Left colon (tissue), 2 donors: ENCODE measurements at regions of chr10 and their contacts with region 1.

Region 1: DNA sequence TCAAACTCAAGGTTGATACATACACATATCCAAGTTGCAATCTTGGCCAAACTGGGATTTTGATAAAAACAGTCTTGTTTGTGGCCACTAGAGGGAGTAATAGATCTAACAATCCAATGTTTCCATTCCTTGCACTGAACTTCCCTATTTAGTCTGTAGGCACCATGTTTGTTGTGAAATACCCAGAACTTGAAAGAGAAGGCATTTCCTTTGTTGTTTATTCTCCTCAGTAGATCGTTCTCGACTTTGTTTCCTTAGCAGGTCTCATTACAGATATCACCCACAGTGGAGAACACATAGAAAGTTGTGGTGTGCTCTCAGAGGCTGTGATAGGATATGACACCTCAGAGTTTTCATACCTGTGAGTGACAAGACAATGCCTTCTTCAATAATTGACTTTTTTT is 70.3 kb upstream of the MXI1 start:
- DNase-seq: no peak
- ATAC-seq: peak; percentile 56

Region 2: GRCh38 chr10:109883859-109884771 is 253.0 kb before region 1 on chr10:
- intact Hi-C with region 1: loop called in 1 of 2 experiments (anchors 10 kb)
- DNase-seq: peak; percentile 47 to 67
- ATAC-seq: peak; percentile 91

Region 3: DNA sequence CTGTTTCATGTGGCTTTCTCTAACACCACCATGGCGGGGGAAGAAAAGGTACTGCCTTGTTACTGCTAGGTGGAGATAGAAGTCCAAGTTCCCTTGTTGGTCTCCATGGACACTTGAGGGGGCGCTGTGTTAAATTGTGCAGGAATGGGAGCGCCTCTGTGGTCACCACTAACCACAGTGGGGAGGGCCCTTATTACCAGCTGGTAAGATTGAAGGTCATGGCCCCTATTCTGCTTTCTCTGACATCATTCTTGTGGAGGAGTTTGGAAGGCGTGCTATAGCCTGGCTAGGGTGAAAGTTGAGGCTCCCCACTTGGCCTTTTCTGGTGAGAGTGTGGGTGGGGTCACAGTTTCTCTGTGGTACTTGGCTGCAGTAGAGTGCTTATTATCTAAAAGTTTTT is 55.4 kb after region 1 on chr10:
- intact Hi-C with region 1: loop called in 1 of 2 experiments (anchors 10 kb)
- DNase-seq: no peak
- ATAC-seq: no peak

Region 4: GRCh38 chr10:110206995-110207804 is 70.1 kb after region 1 on chr10 and contains the start of gene MXI1:
- intact Hi-C with region 1: loop called in 1 of 2 experiments (anchors 5 kb)
- DNase-seq: peak; percentile 87 to 90
- ATAC-seq: peak; percentile 44
- total RNA-seq, gene MXI1: 134 to 154 TPM

Region 5: DNA sequence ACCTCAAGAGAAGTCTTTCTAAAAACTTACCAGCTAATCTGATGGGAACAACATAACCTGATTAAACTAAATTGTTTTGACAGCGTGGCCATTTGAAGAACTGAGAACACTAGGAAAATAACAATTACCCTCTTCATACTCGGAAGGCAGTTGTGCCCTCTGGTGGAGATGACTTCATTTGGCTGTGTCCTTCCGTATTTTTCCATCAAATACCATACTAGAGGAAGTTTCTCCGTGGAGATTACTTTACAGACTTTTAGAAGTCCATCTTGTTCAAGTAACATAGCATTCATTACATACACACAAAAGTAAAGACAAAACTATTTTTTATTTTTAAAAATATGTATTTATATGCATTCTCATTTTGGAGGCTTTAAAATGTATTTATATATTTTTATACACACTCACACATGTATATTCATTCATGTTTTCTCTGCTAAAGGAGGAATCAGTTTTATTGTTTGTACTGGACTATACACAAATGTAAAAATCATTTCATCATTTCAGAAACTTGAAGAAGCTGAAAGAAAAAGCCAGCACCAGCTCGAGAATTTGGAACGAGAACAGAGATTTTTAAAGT is 142.4 kb after region 1 on chr10:
- intact Hi-C with region 1: loop called (anchors 2 to 5 kb)
- DNase-seq: peak; percentile 36 to 63
- ATAC-seq: peak; percentile 85